GM18951 (cell line): ENCODE measurements at regions of chr2 and their contacts with region 1.

Region 1: GRCh38 chr2:112749755-112750559 is 14.5 kb downstream of the CKAP2L start:
- POLR2A ChIP-seq: no peak

Region 2: DNA sequence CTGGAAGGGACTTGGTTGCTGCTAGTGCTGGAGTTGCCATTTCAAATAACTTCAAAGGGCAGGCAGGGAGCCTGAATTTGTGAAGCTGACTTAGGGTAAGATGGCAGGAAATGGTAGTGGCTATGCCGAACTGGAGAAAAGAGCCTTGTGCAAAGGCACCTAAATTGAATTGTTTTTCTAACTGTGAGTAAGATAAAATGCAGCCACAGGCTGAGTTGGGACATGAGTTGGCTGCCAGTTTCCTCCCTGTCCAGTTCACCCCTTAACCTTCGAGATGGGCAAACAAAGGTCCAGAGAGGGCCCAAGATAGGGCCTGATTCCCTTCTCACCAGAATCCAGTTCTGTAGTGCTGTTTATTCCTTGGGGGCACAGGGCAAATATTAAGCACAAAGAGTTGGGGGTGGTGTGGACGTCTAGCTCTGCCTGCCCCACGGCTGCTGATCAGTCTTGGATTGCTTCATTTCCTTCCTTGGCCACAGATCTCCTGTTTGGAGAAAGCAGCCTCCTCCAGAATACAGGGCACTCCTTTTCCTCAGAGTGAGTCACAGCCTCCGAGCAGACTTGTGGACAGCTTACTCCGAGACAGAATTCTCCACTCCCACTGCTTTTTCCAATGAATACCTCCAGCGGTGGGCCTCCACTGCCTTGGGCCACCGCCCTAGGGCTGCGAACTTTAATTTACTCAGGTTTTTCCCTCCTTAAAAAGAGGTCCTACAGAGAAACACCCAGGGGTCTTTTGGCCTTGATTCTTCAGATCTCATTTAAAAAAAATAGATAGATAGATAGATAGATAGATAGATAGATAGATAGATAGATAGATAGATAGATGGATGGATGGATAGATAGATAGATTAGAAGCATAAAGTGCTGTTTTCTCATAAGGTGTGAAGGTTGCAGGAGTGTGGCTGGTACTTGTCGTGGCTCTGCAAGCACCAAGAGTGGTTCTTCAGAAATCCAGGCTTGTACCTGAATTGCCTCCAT is 122.6 kb before region 1 on chr2:
- in situ Hi-C with region 1: no loop called
- POLR2A ChIP-seq: no peak

Region 3: GRCh38 chr2:112877423-112877822 is 127.5 kb after region 1 on chr2:
- in situ Hi-C with region 1: loop called (anchors 5 kb)
- POLR2A ChIP-seq: no peak

Region 4: GRCh38 chr2:112958428-112959108 is 208.6 kb after region 1 on chr2:
- in situ Hi-C with region 1: loop called (anchors 10 kb)
- POLR2A ChIP-seq: no peak